Adrenal gland (tissue), 19 donors: ENCODE measurements at regions of chr14 and their contacts with region 1.

Region 1: DNA sequence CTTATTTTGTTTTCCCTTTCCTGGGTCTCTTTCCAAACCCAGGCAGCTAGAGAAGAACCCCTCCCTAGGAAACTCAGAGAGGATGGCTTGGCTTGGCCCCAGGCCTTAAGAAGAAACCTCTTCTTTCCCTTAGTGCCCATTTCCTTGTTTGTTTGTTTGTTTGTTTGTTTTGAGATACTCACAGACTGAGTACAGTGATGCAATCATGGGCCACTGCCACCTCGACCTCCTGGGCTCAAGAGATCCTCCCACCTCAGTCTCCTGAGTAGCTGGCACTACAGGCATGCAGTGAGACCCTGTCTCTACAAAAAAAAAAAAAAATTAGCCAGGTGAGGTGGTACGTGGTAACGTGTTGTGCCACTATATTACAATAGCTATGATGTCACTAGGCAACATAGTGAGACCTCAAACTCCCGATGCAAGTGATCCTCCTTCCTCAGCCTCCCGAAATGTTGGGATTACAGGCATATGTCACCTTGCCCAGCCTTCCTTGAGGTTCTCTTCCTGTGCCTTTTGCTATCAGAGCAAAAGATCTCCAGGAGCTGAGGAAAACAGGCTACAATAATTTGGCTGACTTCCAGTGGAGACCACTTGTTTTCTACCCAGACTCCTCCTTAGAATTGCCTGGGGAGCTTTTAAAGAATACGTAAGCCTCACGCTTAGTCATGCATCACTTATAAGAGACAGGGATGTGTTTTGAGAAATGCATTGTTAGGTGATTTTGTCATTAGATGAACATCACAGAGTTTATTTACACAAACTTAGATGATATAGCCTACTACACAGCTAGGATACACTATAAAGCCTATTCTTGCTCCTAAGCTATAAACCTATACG is 34.5 kb upstream of the LGALS3 start:
- DNase-seq: no peak
- H3K4me3 ChIP-seq: no peak overlapping the region
- H3K27ac ChIP-seq: no peak overlapping the region
- H3K4me1 ChIP-seq: peaks cover 0 to 9% of the 10 kb centered on the region in 2 donors
- H3K27me3 ChIP-seq: no peaks in the 10 kb centered on the region
- CTCF ChIP-seq: no peak
- POLR2A ChIP-seq: no peak

Region 2: DNA sequence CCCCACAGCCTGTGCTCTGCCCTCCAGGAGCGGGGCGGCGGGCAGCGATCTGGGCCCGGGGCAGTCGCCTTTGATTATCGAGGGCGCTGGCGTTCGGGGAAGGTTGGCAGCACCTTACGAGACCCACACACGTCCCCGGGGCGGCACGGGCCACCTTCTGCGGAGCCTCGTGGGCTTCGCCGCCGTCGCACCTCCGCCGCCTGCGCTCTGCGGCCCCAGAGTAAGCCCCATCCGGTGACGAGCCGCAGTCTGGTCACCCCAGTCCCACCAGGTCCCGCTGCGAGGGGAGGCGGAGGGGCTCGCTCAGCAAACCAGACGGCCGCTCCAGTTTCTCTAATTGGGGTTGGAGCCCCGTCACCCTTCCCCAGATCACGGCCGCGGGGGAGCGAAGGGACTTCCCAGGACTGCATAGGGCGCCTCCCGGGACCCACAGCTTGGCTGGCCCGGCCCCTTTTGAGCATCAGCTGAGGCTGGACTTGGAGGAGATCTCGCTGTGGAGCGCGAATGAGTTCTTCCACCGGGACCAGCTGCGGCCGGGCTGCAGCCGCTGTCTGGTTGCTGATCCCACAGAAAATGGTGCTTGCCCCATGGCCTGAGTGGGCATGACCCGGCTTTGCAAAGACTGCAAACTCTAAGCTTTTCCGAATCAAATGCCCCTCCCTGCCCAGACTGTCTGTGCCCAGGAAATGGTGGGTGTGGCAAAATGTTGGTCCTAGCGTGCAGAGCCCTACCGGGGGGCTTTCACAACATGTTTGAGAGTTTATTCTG is 35.1 kb after region 1 on chr14:
- intact Hi-C with region 1: loop called in 1 of 2 experiments (anchors 2 kb)
- DNase-seq: peak; percentile 51 to 77 (median 70)
- H3K4me3 ChIP-seq: peak overlapping the region in 3 of 4 donors; percentile 33 to 80 (median 57)
- H3K27ac ChIP-seq: peak overlapping the region in 4 of 5 donors; percentile 61 to 94 (median 78)
- H3K4me1 ChIP-seq: peaks cover 3 to 42% of the 10 kb centered on the region in 2 donors
- H3K27me3 ChIP-seq: no peaks in the 10 kb centered on the region
- CTCF ChIP-seq: no peak
- POLR2A ChIP-seq: peak in 1 of 2 donors; percentile 29

Region 3: GRCh38 chr14:55160989-55161388 is 66.5 kb after region 1 on chr14:
- intact Hi-C with region 1: loop called (anchors 5 kb)
- DNase-seq: no peak
- H3K4me3 ChIP-seq: no peak overlapping the region
- H3K27ac ChIP-seq: no peak overlapping the region
- H3K4me1 ChIP-seq: no peaks in the 10 kb centered on the region
- H3K27me3 ChIP-seq: no peaks in the 10 kb centered on the region
- CTCF ChIP-seq: peak; percentile 26 to 83 (median 62)
- POLR2A ChIP-seq: no peak

Region 4: GRCh38 chr14:55191203-55192053 is 96.9 kb after region 1 on chr14 and contains the start of gene DLGAP5:
- intact Hi-C with region 1: no loop called
- DNase-seq: peak; percentile 91 to 98 (median 95)
- H3K4me3 ChIP-seq: peak within 1 kb of the TSS in 2 of 4 donors; percentile 31 to 60
- H3K27ac ChIP-seq: no peak within 1 kb of the TSS
- H3K4me1 ChIP-seq: peaks cover 0 to 4% of the 10 kb centered on the region in 2 donors
- H3K27me3 ChIP-seq: no peaks in the 10 kb centered on the region
- CTCF ChIP-seq: no peak
- POLR2A ChIP-seq: peak in 1 of 2 donors; percentile 34
- total RNA-seq, gene DLGAP5: 0.35 to 12.5 (median 0.99) TPM in 8 of 9 donors, not detected in the other